AG04449 (cell line): ENCODE measurements at regions of chr1 and their contacts with region 1.

Region 1: GRCh38 chr1:166838766-166839599 is at the start of gene POGK:
- DNase-seq: no peak
- H3K4me3 ChIP-seq: peak within 1 kb of the TSS; percentile 72
- CTCF ChIP-seq: no peak

Region 2: GRCh38 chr1:166875734-166876539 is 37.0 kb after region 1 on chr1 and contains the start of gene TADA1:
- CTCF ChIA-PET with region 1: interaction called, 4 read pairs
- POLR2A ChIA-PET with region 1: interaction called, 11 read pairs
- DNase-seq: peak; percentile 80
- H3K4me3 ChIP-seq: peak within 1 kb of the TSS; percentile 75
- CTCF ChIP-seq: no peak